ENCODE measurements at regions of chr3 and their contacts with region 1.

Region 1: DNA sequence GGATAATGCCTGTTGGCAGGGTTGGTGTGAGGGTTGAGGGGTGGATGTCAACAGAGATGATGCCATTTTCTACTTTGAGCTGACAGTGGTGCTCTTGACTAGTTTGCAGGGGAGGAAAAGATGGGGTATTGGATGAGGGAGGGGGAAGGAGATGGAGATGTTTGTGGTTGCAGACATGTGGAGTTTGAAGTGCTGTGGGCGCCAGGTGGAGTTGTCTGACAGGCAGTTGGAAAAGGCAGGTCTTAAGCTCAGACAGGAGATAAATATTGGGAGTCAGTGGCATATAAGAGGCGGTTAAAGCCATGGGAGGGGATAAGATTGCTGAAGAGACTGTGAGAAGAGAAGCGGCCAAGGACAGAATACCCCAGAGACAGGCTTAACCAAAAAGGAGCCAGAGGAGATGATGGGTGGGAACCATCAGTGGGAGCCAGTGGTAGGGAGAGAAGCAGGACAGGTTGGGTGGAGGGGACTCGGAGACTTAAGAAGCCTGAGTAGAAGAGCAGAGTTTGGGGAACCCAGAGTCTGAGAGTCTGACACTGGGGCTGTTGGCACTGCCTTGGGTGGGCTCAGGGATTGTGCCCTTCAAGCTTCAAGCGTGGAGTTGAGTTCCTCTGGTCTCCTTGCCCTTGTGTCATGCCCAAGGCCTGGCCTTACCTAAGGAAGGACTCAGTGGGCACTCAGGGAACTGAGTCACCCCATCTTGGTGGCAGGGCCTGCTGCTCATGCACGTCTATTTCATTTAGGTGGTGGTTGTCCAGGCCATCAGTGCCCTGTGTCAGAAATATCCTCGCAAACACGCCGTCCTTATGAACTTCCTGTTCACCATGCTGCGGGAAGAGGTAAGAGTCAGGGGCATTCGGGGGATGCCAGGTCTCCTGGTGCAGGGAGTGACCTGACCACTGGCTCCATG is 14.0 kb downstream of the COPG1 start:
- DNase-seq: no peak
- H3K4me3 ChIP-seq: no peak overlapping the region
- H3K4me3 Mint-ChIP-seq: no peak overlapping the region
- H3K27ac ChIP-seq: peak overlapping the region in 1 of 2 donors; percentile 20
- H3K27ac Mint-ChIP-seq: peak overlapping the region in 4 of 7 donors; percentile 3 to 59 (median 10)
- H3K4me1 ChIP-seq: no peaks in the 10 kb centered on the region
- H3K4me1 Mint-ChIP-seq: no peaks in the 10 kb centered on the region
- H3K27me3 ChIP-seq: no peaks in the 10 kb centered on the region
- H3K27me3 Mint-ChIP-seq: no peaks in the 10 kb centered on the region
- CTCF ChIP-seq: no peak

Region 2: DNA sequence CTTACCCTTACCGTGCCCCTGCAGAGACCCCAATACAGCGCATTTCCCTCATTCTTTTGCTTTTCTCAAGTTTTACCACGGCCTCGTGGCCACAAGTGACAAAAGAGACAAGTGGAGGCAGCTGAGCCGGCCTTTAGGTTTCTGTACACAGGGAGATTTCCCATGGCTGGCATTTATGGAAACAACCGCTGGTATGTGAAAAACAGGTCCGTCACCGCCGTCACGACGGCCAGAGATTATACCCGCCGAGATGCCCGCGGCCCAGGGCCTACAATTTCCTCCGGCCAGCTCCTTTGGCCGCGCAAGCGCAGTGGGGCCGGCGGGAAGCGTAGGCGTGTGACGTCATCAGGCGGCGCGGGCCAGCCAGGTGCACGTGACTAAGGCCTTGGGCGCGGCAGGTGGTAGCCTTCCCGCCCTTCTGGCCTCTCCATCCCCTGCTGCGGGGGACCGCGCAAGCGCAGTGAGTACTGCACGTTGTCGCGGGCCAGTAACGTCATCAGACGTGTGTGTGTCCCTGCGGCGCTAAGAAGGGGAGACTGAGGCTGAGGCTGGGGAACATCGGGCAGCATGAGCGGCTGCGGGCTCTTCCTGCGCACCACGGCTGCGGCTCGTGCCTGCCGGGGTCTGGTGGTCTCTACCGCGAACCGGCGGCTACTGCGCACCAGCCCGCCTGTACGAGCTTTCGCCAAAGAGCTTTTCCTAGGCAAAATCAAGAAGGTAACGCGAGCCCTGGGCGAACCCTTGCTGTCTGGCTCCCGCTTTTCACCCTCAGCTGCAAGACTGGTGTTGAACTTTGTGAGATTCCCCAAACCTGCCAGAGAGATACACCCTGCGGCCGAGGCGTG is 384.1 kb before region 1 on chr3 and contains the start of gene ACAD9:
- intact Hi-C with region 1: loop called in 1 of 2 experiments (anchors 10 kb)
- DNase-seq: peak; percentile 97 to 99 (median 97)
- H3K4me3 ChIP-seq: peak within 1 kb of the TSS; percentile 69 to 83 (median 80)
- H3K4me3 Mint-ChIP-seq: peak within 1 kb of the TSS; percentile 87 to 92
- H3K27ac ChIP-seq: peak within 1 kb of the TSS; percentile 96 to 98
- H3K27ac Mint-ChIP-seq: peak within 1 kb of the TSS; percentile 96 to 100 (median 97)
- H3K4me1 ChIP-seq: peaks cover 40 to 55% of the 10 kb centered on the region in 2 donors
- H3K4me1 Mint-ChIP-seq: peaks cover 59% of the 10 kb centered on the region
- H3K27me3 ChIP-seq: no peaks in the 10 kb centered on the region
- H3K27me3 Mint-ChIP-seq: peaks cover 0 to 2% (median 0%) of the 10 kb centered on the region in 3 donors
- CTCF ChIP-seq: no peak
- polyA plus RNA-seq, gene ACAD9: 21.9 to 27.7 (median 25.6) TPM

Region 3: DNA sequence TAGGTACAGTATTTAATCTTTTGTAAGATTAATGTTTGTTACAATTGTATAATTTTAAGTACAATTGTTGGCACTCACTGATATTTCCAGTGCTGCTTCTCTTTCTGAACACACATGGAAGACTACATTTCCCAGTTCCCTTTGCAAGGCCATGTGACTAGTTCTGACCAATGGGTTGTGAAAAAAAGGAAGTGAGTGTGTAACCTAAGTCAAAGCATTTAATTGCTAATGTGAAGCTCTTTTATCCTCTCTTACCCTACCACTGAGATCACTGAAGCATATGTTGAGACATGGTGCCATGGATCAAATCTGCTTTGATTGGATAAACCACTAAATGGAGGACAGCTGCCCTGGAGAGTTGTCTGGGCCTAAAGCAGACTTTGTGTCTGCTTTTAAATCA is 427.0 kb after region 1 on chr3:
- intact Hi-C with region 1: no loop called
- DNase-seq: peak; percentile 67 to 80 (median 78)
- H3K4me3 ChIP-seq: no peak overlapping the region
- H3K4me3 Mint-ChIP-seq: no peak overlapping the region
- H3K27ac ChIP-seq: no peak overlapping the region
- H3K27ac Mint-ChIP-seq: peak overlapping the region in 1 of 7 donors; percentile 64
- H3K4me1 ChIP-seq: no peaks in the 10 kb centered on the region
- H3K4me1 Mint-ChIP-seq: peaks cover 10% of the 10 kb centered on the region
- H3K27me3 ChIP-seq: no peaks in the 10 kb centered on the region
- H3K27me3 Mint-ChIP-seq: peaks cover 0 to 2% (median 0%) of the 10 kb centered on the region in 3 donors
- CTCF ChIP-seq: no peak

Measured in CD14-positive monocyte (primary cell).